GM10248 (cell line): ENCODE measurements at regions of chr1 and their contacts with region 1.

Region 1: DNA sequence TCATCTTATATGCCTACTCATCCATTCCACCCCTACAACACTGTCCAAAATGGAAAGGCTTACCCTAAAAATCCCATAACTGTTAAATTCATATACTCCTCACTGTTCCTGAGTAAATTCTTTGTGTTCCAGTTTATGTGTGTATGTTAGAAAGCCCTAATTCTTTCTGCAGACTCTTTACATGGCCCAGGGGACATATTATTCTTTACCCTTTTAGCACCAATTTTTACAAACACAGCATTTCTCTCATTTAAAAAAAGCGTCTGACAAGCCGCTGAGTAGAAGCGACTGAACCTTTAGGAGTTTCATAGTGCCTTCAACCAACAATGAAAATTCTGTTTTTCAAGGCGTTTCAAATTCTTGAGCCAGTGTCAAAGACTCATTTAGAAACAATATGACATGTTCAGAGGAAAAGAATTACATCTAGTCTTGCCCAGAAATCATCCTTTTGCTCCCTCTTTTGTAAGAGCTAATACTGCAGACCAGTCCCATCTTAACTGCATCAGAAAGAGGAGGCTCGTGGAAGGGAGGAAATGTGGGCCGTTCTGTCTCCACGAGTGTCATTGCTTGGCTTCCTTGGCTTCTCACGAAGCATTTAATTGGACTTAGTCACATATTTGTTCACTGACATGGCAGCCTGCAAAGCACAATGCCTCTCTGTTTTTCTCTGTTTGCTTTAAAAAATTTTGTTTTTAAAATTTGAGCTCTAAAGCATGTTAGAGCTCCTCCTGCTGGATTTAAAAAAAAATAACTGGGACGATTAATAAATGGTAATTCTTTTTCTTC is 21.3 kb upstream of the C1orf105 start:
- DNase-seq: no peak
- CTCF ChIP-seq: peak; percentile 31

Region 2: GRCh38 chr1:172002725-172003345 is 396.3 kb before region 1 on chr1:
- CTCF ChIA-PET with region 1: interaction called, 26 read pairs
- POLR2A ChIA-PET with region 1: no interaction called
- DNase-seq: peak; percentile 12
- CTCF ChIP-seq: peak; percentile 71

Region 3: DNA sequence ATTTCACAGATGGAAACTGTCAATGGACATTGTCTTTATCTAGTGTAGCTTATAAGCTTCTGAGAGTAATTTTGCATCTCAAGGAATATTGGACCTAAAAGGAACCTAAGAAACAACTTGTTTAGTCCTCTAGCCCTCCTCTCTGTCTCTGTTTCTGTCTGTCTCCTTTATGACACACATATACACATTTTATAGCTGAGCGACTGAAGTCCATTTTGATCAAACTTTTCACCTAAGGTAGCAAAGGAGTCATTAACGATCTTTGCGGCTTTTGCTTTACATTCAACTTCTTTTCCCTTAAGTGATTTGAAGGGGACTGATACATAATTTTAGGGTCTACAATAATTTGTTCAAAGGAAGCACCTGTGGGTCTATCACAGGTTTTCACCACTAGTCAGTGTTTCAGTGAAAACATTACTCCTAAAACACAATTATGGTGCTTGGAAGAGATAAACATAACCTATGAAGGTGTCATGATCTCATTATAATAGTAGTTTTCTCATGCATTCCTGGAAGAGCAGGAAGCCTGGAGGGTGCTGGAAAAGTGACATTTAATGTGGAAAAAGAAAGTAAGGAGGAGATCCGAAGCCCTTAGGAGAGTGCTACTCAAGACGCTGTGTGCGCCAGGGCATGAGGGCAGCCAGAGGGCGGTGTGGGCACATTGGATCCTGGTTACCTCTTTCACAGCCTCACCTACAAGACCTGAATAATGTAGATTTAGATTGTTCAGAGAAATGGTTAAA is 309.2 kb before region 1 on chr1:
- CTCF ChIA-PET with region 1: interaction called, 18 read pairs
- POLR2A ChIA-PET with region 1: no interaction called
- DNase-seq: peak; percentile 31
- CTCF ChIP-seq: peak; percentile 78

Region 4: GRCh38 chr1:172135076-172135672 is 264.0 kb before region 1 on chr1:
- CTCF ChIA-PET with region 1: interaction called, 11 read pairs
- POLR2A ChIA-PET with region 1: no interaction called
- DNase-seq: peak; percentile 16
- CTCF ChIP-seq: peak; percentile 56

Region 5: DNA sequence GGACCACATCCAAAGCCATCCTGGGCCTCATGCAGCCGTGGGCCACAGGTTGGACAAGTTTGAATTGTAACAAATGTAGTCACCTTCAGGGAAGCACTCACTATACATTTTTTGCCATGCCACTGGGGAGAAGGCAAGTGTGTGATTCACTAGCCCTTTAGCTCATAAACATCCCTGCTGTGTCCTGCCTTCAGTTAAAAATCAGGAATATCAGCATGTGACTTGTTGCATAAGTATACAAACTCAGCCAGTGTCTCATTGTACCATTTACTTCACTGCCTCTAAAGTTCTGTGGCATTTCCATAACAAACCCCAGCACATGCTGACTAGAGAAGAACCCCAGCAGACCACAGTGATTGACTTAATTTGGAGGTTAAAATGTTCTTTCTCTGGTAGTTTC is 120.7 kb before region 1 on chr1:
- CTCF ChIA-PET with region 1: no interaction called
- POLR2A ChIA-PET with region 1: no interaction called
- DNase-seq: no peak
- CTCF ChIP-seq: no peak

Region 6: GRCh38 chr1:172338295-172338735 is 60.8 kb before region 1 on chr1:
- CTCF ChIA-PET with region 1: interaction called, 11 read pairs
- POLR2A ChIA-PET with region 1: no interaction called
- DNase-seq: peak; percentile 21
- CTCF ChIP-seq: no peak

Region 7: DNA sequence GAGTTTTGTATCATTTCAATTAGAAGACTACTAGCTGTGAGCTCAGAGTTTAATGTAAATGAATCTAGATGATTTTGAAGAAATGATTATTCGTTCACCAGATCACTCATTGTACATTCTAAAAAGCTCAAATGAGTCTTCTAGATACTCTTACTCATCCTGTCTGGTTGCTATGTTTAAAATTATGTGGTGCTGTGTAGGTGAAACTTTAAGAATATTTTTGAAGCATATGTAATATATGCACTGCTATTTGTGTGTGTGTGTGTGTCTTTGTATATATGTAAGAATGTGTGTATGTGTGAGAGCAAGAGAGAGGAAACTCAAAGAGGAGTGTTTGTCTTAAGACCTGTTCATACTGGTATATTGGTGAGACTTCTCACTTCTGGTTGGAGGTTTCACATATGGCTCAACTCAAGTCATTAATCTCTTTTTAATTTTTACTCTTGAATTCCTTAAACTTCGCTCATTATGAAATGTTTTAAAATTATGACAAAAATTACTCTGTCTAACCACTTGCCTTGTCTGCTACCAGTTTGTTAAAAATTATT is 12.7 kb after region 1 on chr1:
- CTCF ChIA-PET with region 1: interaction called, 13 read pairs
- POLR2A ChIA-PET with region 1: no interaction called
- DNase-seq: no peak
- CTCF ChIP-seq: no peak

Region 8: GRCh38 chr1:172449585-172450534 is 50.7 kb after region 1 on chr1:
- CTCF ChIA-PET with region 1: no interaction called
- POLR2A ChIA-PET with region 1: no interaction called
- DNase-seq: peak; percentile 74
- CTCF ChIP-seq: peak; percentile 86